ENCODE measurements at regions of chr19 and their contacts with region 1.

Region 1: DNA sequence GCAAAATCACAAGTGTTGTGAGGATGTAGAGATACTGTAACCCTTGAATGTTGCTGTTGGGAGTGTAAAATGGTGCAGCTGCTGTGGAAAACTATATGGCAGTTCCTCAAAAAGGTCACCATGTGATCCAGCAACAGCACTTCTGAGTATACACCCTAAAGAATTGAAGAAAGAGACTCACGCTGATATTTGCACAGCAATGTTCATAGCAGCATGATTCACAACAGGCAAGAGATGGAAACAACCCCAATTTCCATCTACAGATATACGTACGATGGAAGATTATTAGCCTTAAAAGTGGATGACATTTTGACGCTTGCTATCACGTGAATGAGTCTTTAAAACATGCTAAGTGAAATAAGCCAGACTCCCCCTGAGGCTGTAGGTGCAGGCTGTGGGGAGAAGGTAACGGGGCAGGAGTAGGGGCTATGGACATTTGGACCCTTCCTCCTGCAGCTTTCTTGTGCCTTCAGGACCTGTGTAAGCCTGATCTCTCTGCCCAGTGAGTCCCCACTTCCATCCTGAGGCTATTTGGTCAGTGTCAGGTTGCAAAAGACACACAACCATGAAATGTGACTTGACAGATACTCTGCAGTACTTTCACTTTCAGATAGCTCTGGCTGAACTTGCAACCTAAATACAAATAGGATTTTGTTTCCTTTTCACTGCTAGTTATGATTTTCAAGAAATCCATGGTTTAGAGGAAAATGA is 17.6 kb upstream of the EID2 start:
- DNase-seq: peak; percentile 11
- ATAC-seq: peak; percentile 65
- H3K4me3 ChIP-seq: no peak overlapping the region
- H3K27ac ChIP-seq: no peak overlapping the region
- H3K4me1 ChIP-seq: no peaks in the 10 kb centered on the region
- H3K27me3 ChIP-seq: peaks cover 14% of the 10 kb centered on the region
- CTCF ChIP-seq: no peak
- POLR2A ChIP-seq: no peak
- RAD21 ChIP-seq: no peak

Region 2: GRCh38 chr19:39765091-39766076 is 207.8 kb after region 1 on chr19:
- CTCF ChIA-PET with region 1: no interaction called
- POLR2A ChIA-PET with region 1: no interaction called
- dilution Hi-C with region 1: no loop called
- in situ Hi-C with region 1: no loop called
- intact Hi-C with region 1: loop called (anchors 5 kb)
- DNase-seq: peak; percentile 41
- ATAC-seq: peak; percentile 53
- H3K4me3 ChIP-seq: no peak overlapping the region
- H3K27ac ChIP-seq: no peak overlapping the region
- H3K4me1 ChIP-seq: no peaks in the 10 kb centered on the region
- H3K27me3 ChIP-seq: no peaks in the 10 kb centered on the region; the same call in 1 of the 2 replicates
- CTCF ChIP-seq: peak; percentile 66
- POLR2A ChIP-seq: no peak
- RAD21 ChIP-seq: 0 out of 2 replicates have a peak, but pooled peaks have one; percentile 16